ENCODE measurements at regions of chr1 and their contacts with region 1.

Region 1: GRCh38 chr1:38046884-38047602 is 450 bp upstream of the POU3F1 start:
- DNase-seq: peak; percentile 92

Region 2: GRCh38 chr1:38068980-38069340 is 21.9 kb after region 1 on chr1:
- intact Hi-C with region 1: loop called in 1 of 2 experiments (anchors 1 kb)
- DNase-seq: no peak

Region 3: GRCh38 chr1:38516560-38516959 is 469.5 kb after region 1 on chr1:
- intact Hi-C with region 1: loop called in 1 of 2 experiments (anchors 2 kb)
- DNase-seq: no peak

Region 4: GRCh38 chr1:38818175-38818976 is 771.3 kb after region 1 on chr1:
- intact Hi-C with region 1: loop called in 1 of 2 experiments (anchors 10 kb)
- DNase-seq: no peak

Measured in posterior vena cava (tissue), 2 donors.